ENCODE measurements at regions of chr12 and their contacts with region 1.

Region 1: GRCh38 chr12:401235-402028 is at the start of gene CCDC77:
- DNase-seq: peak; percentile 96
- H3K4me3 ChIP-seq: peak within 1 kb of the TSS; percentile 88 to 94 (median 88)
- H3K27ac ChIP-seq: peak within 1 kb of the TSS; percentile 28
- H3K4me1 ChIP-seq: peaks cover 8% of the 10 kb centered on the region
- H3K27me3 ChIP-seq: no peaks in the 10 kb centered on the region
- CTCF ChIP-seq: peak in 1 of 2 donors; percentile 15
- POLR2A ChIP-seq: peak; percentile 27
- total RNA-seq, gene CCDC77: 12.9 and 13.5 TPM in 2 replicates

Region 2: GRCh38 chr12:389139-390096 is 12.0 kb before region 1 on chr12 and contains the start of gene KDM5A:
- CTCF ChIA-PET with region 1: interaction called, 5 read pairs
- POLR2A ChIA-PET with region 1: no interaction called
- dilution Hi-C with region 1: no loop called
- intact Hi-C with region 1: loop called (anchors 1 kb)
- DNase-seq: peak; percentile 94
- H3K4me3 ChIP-seq: peak within 1 kb of the TSS; percentile 67 to 96 (median 72)
- H3K27ac ChIP-seq: peak within 1 kb of the TSS; percentile 58
- H3K4me1 ChIP-seq: peaks cover 27% of the 10 kb centered on the region
- H3K27me3 ChIP-seq: no peaks in the 10 kb centered on the region
- CTCF ChIP-seq: no peak
- POLR2A ChIP-seq: peak; percentile 79
- total RNA-seq, gene KDM5A: 61.0 and 71.5 TPM in 2 replicates

Region 3: GRCh38 chr12:464484-465267 is 63.2 kb after region 1 on chr12:
- CTCF ChIA-PET with region 1: no interaction called
- POLR2A ChIA-PET with region 1: no interaction called
- dilution Hi-C with region 1: no loop called
- intact Hi-C with region 1: no loop called
- DNase-seq: no peak
- H3K4me3 ChIP-seq: no peak overlapping the region
- H3K27ac ChIP-seq: no peak overlapping the region
- H3K4me1 ChIP-seq: no peaks in the 10 kb centered on the region
- H3K27me3 ChIP-seq: peaks cover 36 to 50% of the 10 kb centered on the region in 2 experiments
- CTCF ChIP-seq: no peak
- POLR2A ChIP-seq: no peak